MCF 10A (cell line): ENCODE measurements at regions of chr3 and their contacts with region 1.

Region 1: DNA sequence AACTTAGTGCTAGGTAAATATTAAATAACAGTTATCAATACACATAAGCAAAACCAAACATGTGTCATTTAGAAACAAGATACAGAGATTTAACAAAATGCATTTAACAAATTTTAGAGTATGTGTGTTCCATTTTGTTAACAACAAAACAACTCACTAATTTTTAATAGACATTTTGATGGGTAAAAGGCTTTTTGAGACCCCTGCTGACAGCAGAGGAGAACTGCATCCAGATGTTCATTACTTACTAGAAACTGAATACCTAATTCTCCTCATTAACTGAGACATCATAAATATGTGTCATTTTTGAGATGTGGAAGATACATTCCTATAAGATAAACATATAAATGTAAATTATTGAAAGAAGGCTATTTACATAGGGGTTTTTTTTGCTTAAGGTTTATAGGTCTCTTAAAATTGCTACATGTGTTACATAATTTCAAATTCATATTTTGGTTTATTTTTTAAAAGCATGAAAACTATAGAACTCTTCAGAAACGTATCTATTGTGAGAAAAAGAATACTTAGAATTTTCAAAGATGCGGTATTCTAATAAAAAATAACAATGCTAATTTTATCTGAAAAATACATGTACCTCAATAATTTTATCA is 1009.8 kb downstream of the TUSC7 start:
- DNase-seq: peak; percentile 29
- H3K4me3 Mint-ChIP-seq: no peak overlapping the region
- H3K27ac Mint-ChIP-seq: no peak overlapping the region
- H3K4me1 Mint-ChIP-seq: no peaks in the 10 kb centered on the region
- H3K27me3 Mint-ChIP-seq: no peaks in the 10 kb centered on the region
- CTCF ChIP-seq: peak; percentile 70

Region 2: GRCh38 chr3:116863822-116864589 is 855.4 kb before region 1 on chr3:
- CTCF ChIA-PET with region 1: no interaction called
- POLR2A ChIA-PET with region 1: no interaction called
- intact Hi-C with region 1: loop called (anchors 5 kb)
- DNase-seq: peak; percentile 51
- H3K4me3 Mint-ChIP-seq: no peak overlapping the region
- H3K27ac Mint-ChIP-seq: no peak overlapping the region
- H3K4me1 Mint-ChIP-seq: no peaks in the 10 kb centered on the region
- H3K27me3 Mint-ChIP-seq: no peaks in the 10 kb centered on the region
- CTCF ChIP-seq: peak; percentile 46

Region 3: DNA sequence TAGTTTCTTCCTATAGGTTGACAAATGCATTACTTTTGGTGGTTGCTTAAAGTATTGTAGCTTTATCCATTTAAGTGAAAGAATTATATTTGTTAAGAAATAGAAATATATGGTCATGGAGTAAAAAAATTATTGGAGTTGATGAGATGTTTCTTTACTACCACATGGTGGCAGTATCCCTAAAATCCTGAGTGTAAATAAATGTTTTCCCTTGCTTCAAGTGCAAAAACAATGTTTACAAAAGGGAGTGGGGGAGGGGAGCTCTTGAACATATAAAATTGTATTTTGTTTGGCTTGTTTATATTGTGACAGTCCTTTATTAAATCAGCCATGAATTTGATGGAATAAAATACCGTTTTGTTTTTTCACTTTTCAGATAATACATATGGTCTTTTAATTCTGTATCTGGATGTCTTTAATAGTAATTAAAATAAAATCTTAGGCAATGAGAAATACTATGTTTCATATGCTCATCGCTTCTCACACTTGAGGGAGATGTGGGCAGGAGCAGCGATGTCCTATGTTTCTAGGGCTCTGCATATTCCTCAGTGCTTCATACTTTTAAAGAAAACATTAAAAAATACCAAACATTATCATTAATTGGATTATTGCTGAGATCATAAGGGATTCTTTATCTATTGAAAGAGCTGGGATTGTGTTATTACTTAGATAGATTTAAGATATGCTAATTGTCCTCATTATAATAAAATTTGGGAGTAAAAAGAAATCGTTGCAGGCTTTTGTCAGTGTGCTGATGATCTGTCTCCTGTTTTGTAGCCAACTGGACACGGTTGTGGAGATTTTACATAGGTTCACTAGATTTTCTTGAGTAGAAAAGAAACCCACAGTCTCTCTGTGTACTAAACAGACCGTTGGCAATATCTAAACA is 660.1 kb before region 1 on chr3:
- CTCF ChIA-PET with region 1: interaction called, 4 read pairs
- POLR2A ChIA-PET with region 1: no interaction called
- intact Hi-C with region 1: loop called (anchors 1 kb)
- DNase-seq: peak; percentile 19
- H3K4me3 Mint-ChIP-seq: no peak overlapping the region
- H3K27ac Mint-ChIP-seq: no peak overlapping the region
- H3K4me1 Mint-ChIP-seq: no peaks in the 10 kb centered on the region
- H3K27me3 Mint-ChIP-seq: peaks cover 44% of the 10 kb centered on the region
- CTCF ChIP-seq: peak; percentile 44

Region 4: GRCh38 chr3:117526470-117527079 is 192.8 kb before region 1 on chr3:
- CTCF ChIA-PET with region 1: no interaction called
- POLR2A ChIA-PET with region 1: no interaction called
- intact Hi-C with region 1: loop called (anchors 5 kb)
- DNase-seq: peak; percentile 40
- H3K4me3 Mint-ChIP-seq: no peak overlapping the region
- H3K27ac Mint-ChIP-seq: no peak overlapping the region
- H3K4me1 Mint-ChIP-seq: peaks cover 26% of the 10 kb centered on the region
- H3K27me3 Mint-ChIP-seq: peaks cover 2% of the 10 kb centered on the region
- CTCF ChIP-seq: peak; percentile 58

Region 5: GRCh38 chr3:117811786-117812185 is 92.4 kb after region 1 on chr3:
- CTCF ChIA-PET with region 1: no interaction called
- POLR2A ChIA-PET with region 1: no interaction called
- intact Hi-C with region 1: no loop called
- DNase-seq: no peak
- H3K4me3 Mint-ChIP-seq: no peak overlapping the region
- H3K27ac Mint-ChIP-seq: no peak overlapping the region
- H3K4me1 Mint-ChIP-seq: no peaks in the 10 kb centered on the region
- H3K27me3 Mint-ChIP-seq: no peaks in the 10 kb centered on the region
- CTCF ChIP-seq: no peak

Region 6: GRCh38 chr3:117885011-117885441 is 165.6 kb after region 1 on chr3:
- CTCF ChIA-PET with region 1: no interaction called
- POLR2A ChIA-PET with region 1: no interaction called
- intact Hi-C with region 1: no loop called
- DNase-seq: no peak
- H3K4me3 Mint-ChIP-seq: no peak overlapping the region
- H3K27ac Mint-ChIP-seq: no peak overlapping the region
- H3K4me1 Mint-ChIP-seq: no peaks in the 10 kb centered on the region
- H3K27me3 Mint-ChIP-seq: no peaks in the 10 kb centered on the region
- CTCF ChIP-seq: no peak

Region 7: GRCh38 chr3:117997201-117998049 is 278.0 kb after region 1 on chr3:
- CTCF ChIA-PET with region 1: interaction called, 3 read pairs
- POLR2A ChIA-PET with region 1: no interaction called
- intact Hi-C with region 1: loop called (anchors 10 kb)
- DNase-seq: peak; percentile 77
- H3K4me3 Mint-ChIP-seq: no peak overlapping the region
- H3K27ac Mint-ChIP-seq: no peak overlapping the region
- H3K4me1 Mint-ChIP-seq: no peaks in the 10 kb centered on the region
- H3K27me3 Mint-ChIP-seq: no peaks in the 10 kb centered on the region
- CTCF ChIP-seq: peak; percentile 77